Mammary epithelial cell (primary cell): ENCODE measurements at regions of chr3 and their contacts with region 1.

Region 1: DNA sequence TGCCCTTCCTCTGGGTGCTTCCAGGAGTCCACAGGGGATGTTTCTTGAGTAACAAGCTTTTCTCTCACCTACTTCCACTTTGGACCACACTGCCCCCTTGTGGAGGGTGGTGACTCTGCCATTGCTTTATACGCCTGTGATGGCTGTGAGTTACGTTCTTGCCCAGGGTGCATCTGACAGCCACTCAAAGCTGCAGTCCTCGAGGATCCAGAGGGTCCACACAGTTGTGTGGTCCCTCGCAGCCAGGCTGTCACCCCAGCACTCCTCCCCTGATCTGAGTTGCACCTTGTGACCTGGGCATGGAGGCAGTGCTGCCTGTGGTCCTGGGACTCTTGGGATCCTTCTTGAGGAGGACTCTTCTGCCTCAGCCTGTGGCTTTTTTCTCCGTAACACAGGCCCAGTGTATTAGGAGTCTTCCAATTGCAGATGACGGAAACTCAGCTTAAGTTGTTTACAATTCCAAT is 23.4 kb downstream of the FOXL2 start:
- DNase-seq: peak; percentile 78
- H3K4me3 ChIP-seq: no peak overlapping the region
- H3K27ac ChIP-seq: no peak overlapping the region
- H3K4me1 ChIP-seq: peaks cover 16% of the 10 kb centered on the region
- H3K27me3 ChIP-seq: no peaks in the 10 kb centered on the region
- CTCF ChIP-seq: peak; percentile 94 to 98

Region 2: DNA sequence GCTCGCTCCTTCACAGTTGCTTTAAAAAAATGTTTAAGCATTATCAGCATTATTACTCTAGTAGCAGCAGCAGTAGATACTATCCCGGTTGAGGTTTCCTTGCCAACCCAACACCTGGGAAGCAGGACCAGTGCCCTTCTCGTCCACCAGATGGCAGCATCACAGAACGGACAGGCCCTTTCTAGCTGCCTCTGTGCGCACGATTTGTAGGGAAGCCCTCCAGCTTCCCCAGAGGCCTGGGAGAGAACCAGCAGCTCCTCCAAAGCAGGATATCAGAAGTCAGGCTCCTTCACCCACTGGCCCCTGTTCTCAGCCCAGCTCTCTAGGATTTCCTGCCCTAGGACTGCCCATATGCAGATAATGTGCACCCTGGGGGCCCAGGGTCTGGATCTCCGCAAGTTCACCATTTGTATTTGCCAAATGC is 506.0 kb before region 1 on chr3:
- CTCF ChIA-PET with region 1: no interaction called
- dilution Hi-C with region 1: no loop called
- in situ Hi-C with region 1: loop called (anchors 10 to 25 kb)
- intact Hi-C with region 1: loop called (anchors 1 kb)
- DNase-seq: peak; percentile 69
- H3K4me3 ChIP-seq: no peak overlapping the region
- H3K27ac ChIP-seq: no peak overlapping the region
- H3K4me1 ChIP-seq: no peaks in the 10 kb centered on the region
- H3K27me3 ChIP-seq: no peaks in the 10 kb centered on the region
- CTCF ChIP-seq: peak; percentile 97 to 98

Region 3: DNA sequence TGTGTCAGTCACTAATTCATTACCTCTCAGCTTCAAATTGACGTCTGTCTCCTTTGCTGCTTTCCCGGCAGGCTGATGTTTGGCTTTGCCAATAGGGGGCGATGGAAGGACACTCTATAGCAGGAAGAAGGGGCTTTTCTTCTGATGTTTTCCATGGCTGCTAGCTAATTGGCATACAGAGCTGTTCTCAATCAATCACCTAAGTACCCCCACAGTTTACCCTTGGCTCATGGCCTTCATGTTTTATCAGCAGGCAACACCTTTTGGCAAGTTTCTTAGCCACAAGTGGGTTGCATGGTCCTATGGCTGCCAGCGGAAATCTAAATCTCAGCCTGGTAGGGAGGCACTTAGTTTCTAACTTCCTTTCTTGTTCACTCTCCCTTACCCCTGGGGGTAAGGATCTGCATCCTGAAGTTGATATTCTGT is 444.1 kb before region 1 on chr3:
- CTCF ChIA-PET with region 1: no interaction called
- dilution Hi-C with region 1: no loop called
- in situ Hi-C with region 1: no loop called
- intact Hi-C with region 1: loop called (anchors 1 kb)
- DNase-seq: peak; percentile 15
- H3K4me3 ChIP-seq: no peak overlapping the region
- H3K27ac ChIP-seq: no peak overlapping the region
- H3K4me1 ChIP-seq: no peaks in the 10 kb centered on the region
- H3K27me3 ChIP-seq: no peaks in the 10 kb centered on the region
- CTCF ChIP-seq: peak; percentile 86 to 97

Region 4: DNA sequence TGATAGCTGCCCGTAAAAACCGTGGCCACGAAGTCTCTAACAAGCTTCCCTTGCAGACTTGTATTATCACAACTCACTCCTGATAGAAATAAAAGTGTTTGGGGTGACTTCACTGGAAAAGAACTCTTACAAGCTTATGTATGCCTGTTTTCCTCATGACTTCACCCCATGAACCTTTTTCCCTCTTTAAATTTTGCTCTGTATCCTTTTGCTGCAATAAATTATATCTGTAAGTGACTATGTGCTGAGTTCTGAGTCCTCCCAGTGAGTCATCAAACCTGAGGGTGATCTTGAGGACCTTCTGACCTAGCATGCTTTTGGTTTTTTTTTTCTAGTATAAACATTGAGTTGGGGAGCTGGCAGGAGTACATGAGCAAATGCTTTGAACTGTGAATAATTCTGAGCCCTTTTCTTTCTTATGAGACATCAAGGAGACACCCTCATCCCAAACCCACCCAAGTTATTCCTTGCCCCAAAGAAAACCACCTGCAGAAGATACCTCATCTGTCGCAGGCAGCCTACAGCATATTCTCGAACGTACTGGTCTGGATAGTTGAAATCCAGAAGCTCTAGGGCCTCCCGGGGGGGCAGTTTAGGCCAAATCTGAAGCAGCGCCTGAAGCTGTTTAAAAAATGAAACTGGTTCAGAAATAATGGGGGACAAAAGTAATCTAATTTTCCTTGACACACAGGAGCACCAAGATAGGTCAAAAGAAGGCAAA is 229.1 kb before region 1 on chr3:
- CTCF ChIA-PET with region 1: interaction called, 3 read pairs
- dilution Hi-C with region 1: no loop called
- in situ Hi-C with region 1: loop called (anchors 5 kb)
- intact Hi-C with region 1: loop called (anchors 1 kb)
- DNase-seq: peak; percentile 88
- H3K4me3 ChIP-seq: no peak overlapping the region
- H3K27ac ChIP-seq: no peak overlapping the region
- H3K4me1 ChIP-seq: peaks cover 10% of the 10 kb centered on the region
- H3K27me3 ChIP-seq: no peaks in the 10 kb centered on the region
- CTCF ChIP-seq: no peak

Region 5: GRCh38 chr3:138850151-138850550 is 73.4 kb before region 1 on chr3:
- CTCF ChIA-PET with region 1: no interaction called
- dilution Hi-C with region 1: no loop called
- in situ Hi-C with region 1: no loop called
- intact Hi-C with region 1: no loop called
- DNase-seq: no peak
- H3K4me3 ChIP-seq: no peak overlapping the region
- H3K27ac ChIP-seq: no peak overlapping the region
- H3K4me1 ChIP-seq: no peaks in the 10 kb centered on the region
- H3K27me3 ChIP-seq: no peaks in the 10 kb centered on the region
- CTCF ChIP-seq: no peak